Tibial artery (tissue), 4 donors: ENCODE measurements at regions of chr21 and their contacts with region 1.

Region 1: GRCh38 chr21:20283836-20284235 is 714.4 kb upstream of the NCAM2 start:
- DNase-seq: no peak
- H3K4me3 ChIP-seq: no peak overlapping the region
- H3K27ac ChIP-seq: no peak overlapping the region
- H3K4me1 ChIP-seq: no peaks in the 10 kb centered on the region
- H3K27me3 ChIP-seq: no peaks in the 10 kb centered on the region
- CTCF ChIP-seq: no peak

Region 2: DNA sequence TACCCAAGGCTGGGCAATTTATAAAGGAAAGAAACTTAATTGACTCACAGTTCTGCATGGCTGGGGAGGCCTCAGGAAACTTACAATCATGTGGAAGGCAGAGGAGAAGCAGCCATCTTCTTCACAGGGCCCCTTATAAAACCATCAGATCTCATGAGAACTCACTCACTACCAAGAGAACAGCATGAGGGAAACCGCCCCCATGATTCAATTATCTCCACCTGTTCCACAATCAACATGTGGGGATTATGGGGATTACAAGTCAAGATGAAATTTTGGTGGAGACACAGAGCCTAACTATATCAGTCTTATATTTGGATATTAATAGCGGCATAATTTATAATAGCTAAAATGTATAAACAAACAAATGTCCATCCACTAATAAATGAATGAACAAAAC is 409.3 kb before region 1 on chr21:
- intact Hi-C with region 1: no loop called
- DNase-seq: no peak
- H3K4me3 ChIP-seq: no peak overlapping the region
- H3K27ac ChIP-seq: no peak overlapping the region
- H3K4me1 ChIP-seq: no peaks in the 10 kb centered on the region
- H3K27me3 ChIP-seq: no peaks in the 10 kb centered on the region
- CTCF ChIP-seq: no peak

Region 3: GRCh38 chr21:20315044-20315443 is 31.2 kb after region 1 on chr21:
- intact Hi-C with region 1: no loop called
- DNase-seq: no peak
- H3K4me3 ChIP-seq: no peak overlapping the region
- H3K27ac ChIP-seq: no peak overlapping the region
- H3K4me1 ChIP-seq: no peaks in the 10 kb centered on the region
- H3K27me3 ChIP-seq: no peaks in the 10 kb centered on the region
- CTCF ChIP-seq: no peak

Region 4: DNA sequence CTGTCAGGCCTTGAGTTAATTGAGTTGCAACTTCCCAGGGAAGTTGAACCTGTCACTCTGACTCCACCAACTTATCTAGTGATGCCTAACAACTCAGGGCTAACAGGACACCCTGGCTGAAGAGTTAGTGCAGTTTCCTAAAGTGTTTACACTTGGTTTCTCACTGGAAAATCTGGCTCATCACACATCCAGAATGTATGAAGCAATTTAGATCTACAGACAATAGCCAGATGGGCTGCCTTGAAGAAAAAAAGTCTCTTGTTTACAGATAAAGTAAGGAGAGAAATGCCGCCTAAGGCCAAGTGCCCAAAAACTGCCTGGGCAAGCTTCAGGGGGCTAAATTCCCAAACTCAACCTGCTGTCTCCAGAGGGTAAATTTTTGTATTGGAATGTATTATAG is 268.1 kb after region 1 on chr21:
- intact Hi-C with region 1: no loop called
- DNase-seq: no peak
- H3K4me3 ChIP-seq: no peak overlapping the region
- H3K27ac ChIP-seq: no peak overlapping the region
- H3K4me1 ChIP-seq: no peaks in the 10 kb centered on the region
- H3K27me3 ChIP-seq: no peaks in the 10 kb centered on the region
- CTCF ChIP-seq: no peak

Region 5: GRCh38 chr21:21324297-21324696 is 1040.5 kb after region 1 on chr21:
- intact Hi-C with region 1: loop called (anchors 5 kb)
- DNase-seq: no peak
- H3K4me3 ChIP-seq: no peak overlapping the region
- H3K27ac ChIP-seq: no peak overlapping the region
- H3K4me1 ChIP-seq: no peaks in the 10 kb centered on the region
- H3K27me3 ChIP-seq: no peaks in the 10 kb centered on the region
- CTCF ChIP-seq: no peak